ENCODE measurements at regions of chr7 and their contacts with region 1.

Region 1: GRCh38 chr7:92614660-92615174 is 24.5 kb upstream of the FAM133B start:
- DNase-seq: peak in 1 of 2 donors; percentile 7
- H3K4me3 ChIP-seq: no peak overlapping the region
- H3K27ac ChIP-seq: no peak overlapping the region
- H3K4me1 ChIP-seq: no peaks in the 10 kb centered on the region
- H3K27me3 ChIP-seq: no peaks in the 10 kb centered on the region
- CTCF ChIP-seq: no peak
- POLR2A ChIP-seq: no peak

Region 2: DNA sequence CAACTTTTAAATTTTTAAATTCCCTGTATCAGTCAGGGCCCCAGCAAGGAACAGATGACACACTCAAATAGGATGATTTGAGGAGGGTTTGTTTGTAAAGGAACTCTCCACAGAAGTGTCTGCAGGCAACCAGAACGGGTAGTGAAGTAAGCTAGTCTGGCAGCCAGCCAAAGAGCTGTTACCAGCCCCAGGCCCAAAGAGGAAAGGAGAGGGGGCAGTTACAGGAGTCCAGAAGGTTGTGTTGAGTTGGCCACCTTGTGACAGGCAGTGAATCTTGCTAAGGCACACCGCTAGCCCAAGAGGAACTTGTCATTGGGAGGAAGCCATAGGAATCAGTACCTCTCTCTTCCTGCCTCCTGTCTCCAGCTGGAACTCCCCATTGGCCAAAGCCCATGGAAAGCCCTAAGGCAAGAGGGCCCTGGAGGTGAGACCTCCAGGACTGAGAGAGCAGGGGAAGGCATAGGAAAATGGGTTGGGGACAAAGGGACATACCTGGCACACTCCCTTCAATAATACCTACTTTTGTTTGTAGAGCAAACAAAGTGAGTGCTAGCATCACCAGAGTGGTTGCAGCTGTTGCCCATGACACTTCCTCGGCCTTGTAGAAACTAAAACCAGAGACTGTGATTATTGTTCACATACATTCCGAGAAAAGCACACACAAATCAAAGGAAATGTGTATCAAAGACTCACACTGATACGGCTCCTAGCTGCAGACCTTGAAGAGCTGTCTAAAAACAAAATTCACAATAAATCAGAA is 192.9 kb before region 1 on chr7:
- intact Hi-C with region 1: no loop called
- DNase-seq: peak; percentile 83 to 89
- H3K4me3 ChIP-seq: no peak overlapping the region
- H3K27ac ChIP-seq: peak overlapping the region; percentile 4 to 42 (median 27)
- H3K4me1 ChIP-seq: peaks cover 12 to 19% of the 10 kb centered on the region in 2 donors
- H3K27me3 ChIP-seq: no peaks in the 10 kb centered on the region
- CTCF ChIP-seq: no peak
- POLR2A ChIP-seq: no peak

Region 3: GRCh38 chr7:92447345-92448204 is 167.1 kb before region 1 on chr7 and contains the start of gene GATAD1:
- intact Hi-C with region 1: no loop called
- DNase-seq: peak; percentile 94
- H3K4me3 ChIP-seq: peak within 1 kb of the TSS; percentile 73 to 97 (median 76)
- H3K27ac ChIP-seq: peak within 1 kb of the TSS; percentile 95 to 98 (median 97)
- H3K4me1 ChIP-seq: peaks cover 9 to 10% of the 10 kb centered on the region in 2 donors
- H3K27me3 ChIP-seq: no peaks in the 10 kb centered on the region
- CTCF ChIP-seq: peak in 5 of 6 experiments; percentile 76 to 98 (median 92)
- POLR2A ChIP-seq: peak; percentile 7 to 89
- total RNA-seq, gene GATAD1: 46.1 to 99.0 (median 63.1) TPM

Region 4: DNA sequence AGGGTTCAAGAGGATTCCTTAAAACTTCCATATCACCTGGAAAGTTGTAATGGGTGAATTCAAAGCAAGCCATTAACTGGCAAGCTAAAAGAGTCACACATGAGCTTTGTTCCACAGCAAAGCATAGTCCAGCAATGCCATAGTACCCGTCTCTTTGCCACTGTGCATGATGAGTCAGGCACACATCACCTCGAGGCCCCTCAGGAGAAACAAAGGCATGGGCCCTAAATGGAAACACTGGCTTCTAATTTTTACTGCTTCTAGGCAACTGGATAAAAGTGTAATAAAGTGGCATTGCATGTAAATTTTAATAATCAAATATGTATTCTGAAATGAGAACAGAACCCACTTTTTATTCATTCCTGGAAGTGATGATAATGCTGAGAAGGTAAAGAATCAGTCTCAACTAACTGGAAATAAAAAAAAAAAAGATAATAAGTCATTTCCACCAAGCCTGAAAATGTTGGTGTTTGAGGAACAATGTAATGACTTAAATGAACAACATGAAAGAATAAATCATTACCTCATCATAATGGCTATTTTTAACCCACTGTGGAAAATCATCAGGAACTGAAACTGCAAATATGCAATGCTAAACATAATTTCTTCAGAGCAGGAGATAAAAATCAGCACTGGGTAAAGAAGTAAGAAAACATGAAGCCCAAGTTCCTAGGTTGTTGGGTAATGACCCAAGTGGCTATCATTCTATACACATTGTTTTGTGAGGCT is 116.8 kb after region 1 on chr7:
- intact Hi-C with region 1: no loop called
- DNase-seq: no peak
- H3K4me3 ChIP-seq: no peak overlapping the region
- H3K27ac ChIP-seq: no peak overlapping the region
- H3K4me1 ChIP-seq: no peaks in the 10 kb centered on the region
- H3K27me3 ChIP-seq: no peaks in the 10 kb centered on the region
- CTCF ChIP-seq: no peak
- POLR2A ChIP-seq: no peak

Region 5: GRCh38 chr7:93055543-93056107 is 440.9 kb after region 1 on chr7:
- intact Hi-C with region 1: loop called (anchors 5 kb)
- DNase-seq: no peak
- H3K4me3 ChIP-seq: no peak overlapping the region
- H3K27ac ChIP-seq: no peak overlapping the region
- H3K4me1 ChIP-seq: no peaks in the 10 kb centered on the region
- H3K27me3 ChIP-seq: no peaks in the 10 kb centered on the region
- CTCF ChIP-seq: peak; percentile 42 to 86 (median 70)
- POLR2A ChIP-seq: no peak